HCT116 (cell line): ENCODE measurements at regions of chr17 and their contacts with region 1.

Region 1: DNA sequence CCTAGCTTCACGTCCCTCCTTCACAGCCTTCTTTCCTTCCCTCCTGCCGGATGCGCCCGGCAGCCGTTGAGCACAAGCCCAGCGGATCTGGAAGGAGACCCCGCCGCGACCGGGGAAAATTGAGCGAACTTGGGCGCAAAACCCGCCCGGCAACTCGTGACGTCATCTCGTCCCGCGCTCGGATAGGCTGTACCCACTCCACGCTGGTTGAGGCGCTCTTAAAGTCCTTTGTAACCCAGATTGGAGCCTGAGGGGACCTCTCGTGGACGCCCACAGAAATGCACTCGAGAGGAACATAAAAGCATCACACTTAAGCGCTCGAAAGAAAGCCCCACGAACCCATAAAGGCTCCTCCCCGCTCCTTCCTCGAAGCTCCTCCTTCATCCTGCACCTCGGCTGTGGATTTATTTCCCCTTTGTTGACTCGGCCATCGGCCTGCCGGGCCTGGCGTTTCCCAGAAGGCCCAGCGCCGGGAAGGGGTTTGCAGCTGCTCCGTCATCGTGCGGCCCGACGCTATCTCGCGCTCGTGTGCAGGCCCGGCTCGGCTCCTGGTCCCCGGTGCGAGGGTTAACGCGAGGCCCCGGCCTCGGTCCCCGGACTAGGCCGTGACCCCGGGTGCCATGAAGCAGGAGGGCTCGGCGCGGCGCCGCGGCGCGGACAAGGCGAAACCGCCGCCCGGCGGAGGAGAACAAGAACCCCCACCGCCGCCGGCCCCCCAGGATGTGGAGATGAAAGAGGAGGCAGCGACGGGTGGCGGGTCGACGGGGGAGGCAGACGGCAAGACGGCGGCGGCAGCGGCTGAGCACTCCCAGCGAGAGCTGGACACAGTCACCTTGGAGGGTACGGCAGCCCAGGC is at the start of gene PSMD3:
- DNase-seq: peak; percentile 100
- ATAC-seq: peak; percentile 95
- H3K4me3 ChIP-seq: peak within 1 kb of the TSS; percentile 90 to 100
- H3K27ac ChIP-seq: peak within 1 kb of the TSS; percentile 94
- H3K4me1 ChIP-seq: peaks cover 13 to 25% of the 10 kb centered on the region in 2 experiments; a peak in 3 of 4 replicates
- H3K27me3 ChIP-seq: no peaks in the 10 kb centered on the region
- CTCF ChIP-seq: peak; percentile 63 to 96 (median 67)
- POLR2A ChIP-seq: no peak
- RAD21 ChIP-seq: peak; percentile 96
- total RNA-seq, gene PSMD3: 152 TPM

Region 2: GRCh38 chr17:39872751-39873150 is 107.8 kb before region 1 on chr17:
- CTCF ChIA-PET with region 1: interaction called, 15 read pairs
- POLR2A ChIA-PET with region 1: interaction called, 3 read pairs
- RAD21 ChIA-PET with region 1: no interaction called
- intact Hi-C with region 1: loop called (anchors 5 kb)
- DNase-seq: no peak
- ATAC-seq: no peak
- H3K4me3 ChIP-seq: no peak overlapping the region
- H3K27ac ChIP-seq: no peak overlapping the region
- H3K4me1 ChIP-seq: no peaks in the 10 kb centered on the region
- H3K27me3 ChIP-seq: 0 out of 2 replicates have a peak, but pooled peaks cover 4% of the 10 kb centered on the region
- CTCF ChIP-seq: peak; percentile 13 to 55 (median 40); a peak in 3 of 6 replicates
- POLR2A ChIP-seq: no peak
- RAD21 ChIP-seq: peak; percentile 68

Region 3: GRCh38 chr17:39916918-39917317 is 63.7 kb before region 1 on chr17:
- CTCF ChIA-PET with region 1: no interaction called
- POLR2A ChIA-PET with region 1: no interaction called
- RAD21 ChIA-PET with region 1: no interaction called
- intact Hi-C with region 1: loop called (anchors 1 kb)
- DNase-seq: no peak
- ATAC-seq: peak; percentile 52
- H3K4me3 ChIP-seq: no peak overlapping the region
- H3K27ac ChIP-seq: no peak overlapping the region
- H3K4me1 ChIP-seq: no peaks in the 10 kb centered on the region
- H3K27me3 ChIP-seq: no peaks in the 10 kb centered on the region
- CTCF ChIP-seq: peak in 2 of 3 experiments; percentile 27 to 30; a peak in 4 of 6 replicates
- POLR2A ChIP-seq: no peak
- RAD21 ChIP-seq: no peak; the same call in none of the 2 replicates

Region 4: DNA sequence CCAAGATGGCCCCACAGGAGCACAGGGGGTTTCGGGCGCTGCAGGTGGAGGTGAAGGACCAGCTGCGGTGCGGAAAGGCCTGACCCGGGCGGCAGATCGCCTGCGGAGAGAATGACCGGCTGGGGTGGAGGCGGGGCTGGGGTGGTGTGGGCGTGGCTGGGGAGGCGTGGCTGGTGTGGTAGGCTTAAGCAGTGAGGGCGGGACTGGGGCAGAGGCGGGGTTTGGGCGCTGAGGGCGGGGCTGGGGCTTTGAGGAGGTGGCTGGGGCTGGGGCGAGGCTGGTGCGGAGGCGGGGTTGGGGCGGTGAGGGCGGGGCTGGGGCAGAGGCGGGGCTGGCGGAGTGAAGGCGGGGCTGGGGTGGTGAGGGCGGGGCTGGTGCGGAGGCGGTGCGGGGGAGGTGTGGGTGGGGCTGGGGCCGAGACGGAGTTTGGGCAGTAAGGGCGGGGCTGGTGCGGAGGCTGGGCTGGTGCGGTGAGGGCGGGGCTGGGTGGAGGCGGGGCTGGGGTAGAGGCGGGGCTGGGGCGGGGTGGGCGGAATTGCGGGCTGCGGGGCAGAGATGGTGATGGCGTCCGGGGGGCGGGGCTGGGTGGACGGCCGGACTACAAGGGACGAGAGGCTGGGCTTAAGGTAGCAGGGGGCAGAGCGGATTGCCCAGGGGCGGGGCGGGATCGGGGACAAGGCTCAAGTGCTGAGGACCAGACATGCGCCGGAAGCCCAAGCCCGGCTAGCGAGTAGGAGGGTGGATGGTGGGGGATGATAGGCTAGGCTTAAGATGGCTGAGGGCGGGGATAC is 27.7 kb before region 1 on chr17:
- CTCF ChIA-PET with region 1: interaction called, 6 read pairs
- POLR2A ChIA-PET with region 1: interaction called, 4 read pairs
- RAD21 ChIA-PET with region 1: interaction called in 1 of 2 experiments, 4 read pairs
- intact Hi-C with region 1: loop called (anchors 1 kb)
- DNase-seq: peak; percentile 90
- ATAC-seq: peak; percentile 95
- H3K4me3 ChIP-seq: peak overlapping the region; percentile 37 to 55
- H3K27ac ChIP-seq: peak overlapping the region; percentile 56
- H3K4me1 ChIP-seq: peaks cover 13 to 21% of the 10 kb centered on the region in 2 experiments
- H3K27me3 ChIP-seq: no peaks in the 10 kb centered on the region
- CTCF ChIP-seq: no peak
- POLR2A ChIP-seq: no peak
- RAD21 ChIP-seq: no peak